B cell (primary cell): ENCODE measurements at regions of chr19 and their contacts with region 1.

Region 1: GRCh38 chr19:55339048-55339888 is at the start of gene KMT5C:
- DNase-seq: peak; percentile 100
- ATAC-seq: peak; percentile 79
- H3K4me3 ChIP-seq: peak within 1 kb of the TSS; percentile 65 to 91 (median 70)
- H3K4me3 Mint-ChIP-seq: peak within 1 kb of the TSS; percentile 94
- H3K27ac ChIP-seq: peak within 1 kb of the TSS; percentile 98
- H3K27ac Mint-ChIP-seq: peak within 1 kb of the TSS; percentile 93
- H3K4me1 ChIP-seq: peaks cover 16 to 28% of the 10 kb centered on the region in 2 donors
- H3K4me1 Mint-ChIP-seq: peaks cover 20% of the 10 kb centered on the region
- H3K27me3 ChIP-seq: peaks cover 0 to 23% (median 9%) of the 10 kb centered on the region in 4 experiments
- H3K27me3 Mint-ChIP-seq: peaks cover 19% of the 10 kb centered on the region
- CTCF ChIP-seq: no peak
- total RNA-seq, gene KMT5C: 19.6 and 22.2 TPM in 2 replicates

Region 2: GRCh38 chr19:53867225-53868090 is 1471.8 kb before region 1 on chr19 and contains the start of gene MYADM:
- CTCF ChIA-PET with region 1: no interaction called
- POLR2A ChIA-PET with region 1: no interaction called
- intact Hi-C with region 1: loop called (anchors 5 kb)
- DNase-seq: peak; percentile 100
- ATAC-seq: peak; percentile 77
- H3K4me3 ChIP-seq: peak within 1 kb of the TSS; percentile 82 to 100 (median 90)
- H3K4me3 Mint-ChIP-seq: peak within 1 kb of the TSS; percentile 92
- H3K27ac ChIP-seq: peak within 1 kb of the TSS; percentile 98 to 99
- H3K27ac Mint-ChIP-seq: peak within 1 kb of the TSS; percentile 99
- H3K4me1 ChIP-seq: peaks cover 33 to 59% of the 10 kb centered on the region in 2 donors
- H3K4me1 Mint-ChIP-seq: peaks cover 38% of the 10 kb centered on the region
- H3K27me3 ChIP-seq: no peaks in the 10 kb centered on the region
- H3K27me3 Mint-ChIP-seq: no peaks in the 10 kb centered on the region
- CTCF ChIP-seq: no peak
- total RNA-seq, gene MYADM: 18.5 and 18.9 TPM in 2 replicates

Region 3: DNA sequence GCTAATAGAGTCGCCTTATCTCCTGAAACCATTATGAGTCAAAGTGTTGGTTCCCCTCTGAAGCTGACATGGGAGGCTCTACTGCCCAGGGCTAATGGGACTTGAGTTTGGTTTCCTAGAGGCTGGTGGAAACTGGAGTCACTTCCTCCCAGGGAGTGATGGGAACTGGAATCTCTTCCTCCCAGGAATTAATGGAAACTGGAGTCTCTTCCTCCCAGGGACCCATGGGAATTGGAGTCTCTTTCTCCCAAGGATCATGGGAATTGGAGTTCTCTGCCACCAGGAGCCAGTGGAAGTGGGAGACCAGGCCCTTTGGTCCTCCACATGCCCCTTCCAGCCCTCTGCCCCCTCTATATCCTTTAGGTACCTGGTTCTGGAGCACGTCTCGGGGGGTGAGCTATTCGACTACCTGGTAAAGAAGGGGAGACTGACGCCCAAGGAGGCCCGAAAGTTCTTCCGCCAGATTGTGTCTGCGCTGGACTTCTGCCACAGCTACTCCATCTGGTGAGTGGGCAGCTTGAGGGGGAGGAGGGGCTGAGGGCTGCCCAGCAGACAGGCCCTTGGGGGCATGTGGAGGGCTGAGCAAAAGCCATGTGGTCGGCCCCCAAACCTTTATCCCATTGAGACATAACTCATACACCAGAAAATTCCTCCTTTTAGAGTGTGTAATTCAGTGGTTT is 50.0 kb before region 1 on chr19:
- CTCF ChIA-PET with region 1: interaction called, 12 read pairs
- POLR2A ChIA-PET with region 1: no interaction called
- intact Hi-C with region 1: no loop called
- DNase-seq: no peak
- ATAC-seq: no peak
- H3K4me3 ChIP-seq: no peak overlapping the region
- H3K4me3 Mint-ChIP-seq: no peak overlapping the region
- H3K27ac ChIP-seq: no peak overlapping the region
- H3K27ac Mint-ChIP-seq: no peak overlapping the region
- H3K4me1 ChIP-seq: peaks cover 4 to 6% of the 10 kb centered on the region in 2 donors
- H3K4me1 Mint-ChIP-seq: peaks cover 5% of the 10 kb centered on the region
- H3K27me3 ChIP-seq: no peaks in the 10 kb centered on the region
- H3K27me3 Mint-ChIP-seq: no peaks in the 10 kb centered on the region
- CTCF ChIP-seq: no peak

Region 4: GRCh38 chr19:55353803-55354697 is 14.8 kb after region 1 on chr19:
- CTCF ChIA-PET with region 1: interaction called, 3 read pairs
- POLR2A ChIA-PET with region 1: no interaction called
- intact Hi-C with region 1: loop called (anchors 1 kb)
- DNase-seq: peak; percentile 83
- ATAC-seq: peak; percentile 89
- H3K4me3 ChIP-seq: peak overlapping the region; percentile 27 to 51 (median 33)
- H3K4me3 Mint-ChIP-seq: peak overlapping the region; percentile 82
- H3K27ac ChIP-seq: no peak overlapping the region
- H3K27ac Mint-ChIP-seq: no peak overlapping the region
- H3K4me1 ChIP-seq: peaks cover 23 to 29% of the 10 kb centered on the region in 2 donors
- H3K4me1 Mint-ChIP-seq: peaks cover 23% of the 10 kb centered on the region
- H3K27me3 ChIP-seq: peaks cover 0 to 60% (median 24%) of the 10 kb centered on the region in 4 experiments
- H3K27me3 Mint-ChIP-seq: peaks cover 44% of the 10 kb centered on the region
- CTCF ChIP-seq: no peak

Region 5: GRCh38 chr19:55391191-55391670 is 52.0 kb after region 1 on chr19:
- CTCF ChIA-PET with region 1: no interaction called
- POLR2A ChIA-PET with region 1: no interaction called
- intact Hi-C with region 1: no loop called
- DNase-seq: no peak
- ATAC-seq: no peak
- H3K4me3 ChIP-seq: no peak overlapping the region
- H3K4me3 Mint-ChIP-seq: no peak overlapping the region
- H3K27ac ChIP-seq: no peak overlapping the region
- H3K27ac Mint-ChIP-seq: no peak overlapping the region
- H3K4me1 ChIP-seq: peaks cover 24 to 33% of the 10 kb centered on the region in 2 donors
- H3K4me1 Mint-ChIP-seq: peaks cover 40% of the 10 kb centered on the region
- H3K27me3 ChIP-seq: no peaks in the 10 kb centered on the region
- H3K27me3 Mint-ChIP-seq: no peaks in the 10 kb centered on the region
- CTCF ChIP-seq: no peak

Region 6: DNA sequence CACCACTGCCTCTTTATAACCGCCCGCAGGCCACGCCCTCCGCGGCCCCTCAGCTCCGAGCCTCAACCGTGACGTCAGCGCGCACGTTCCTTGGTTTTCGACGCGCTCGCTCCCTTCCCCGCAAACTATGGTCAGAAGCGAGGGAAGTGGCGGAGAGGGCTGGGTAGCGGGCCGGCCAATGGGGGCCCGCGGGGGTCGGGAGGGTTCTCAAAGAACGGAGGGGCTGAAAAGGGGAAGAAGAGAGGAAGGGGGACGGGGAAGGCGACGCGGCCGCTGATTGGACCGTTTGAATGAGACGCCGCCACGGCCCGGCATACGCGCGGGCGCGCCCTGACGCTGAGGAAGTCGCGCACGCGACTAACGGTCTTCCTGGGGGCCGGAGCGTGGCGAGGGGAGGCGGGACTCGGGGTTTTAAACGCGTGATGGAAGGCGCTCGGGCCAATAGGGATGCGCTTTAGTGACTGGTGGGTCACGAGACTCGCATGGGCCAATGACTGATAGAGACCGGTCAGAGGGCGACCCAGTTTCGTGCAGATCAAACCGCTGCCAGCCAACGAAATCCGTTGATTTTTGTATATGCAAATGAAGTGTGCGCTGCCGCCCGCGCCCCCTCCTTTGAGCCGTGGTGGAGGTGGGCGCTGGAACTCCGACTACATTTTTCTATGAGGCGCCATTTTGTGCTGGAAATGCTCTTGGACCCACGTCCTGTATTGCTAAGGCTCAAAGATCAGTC is 68.7 kb after region 1 on chr19:
- CTCF ChIA-PET with region 1: no interaction called
- POLR2A ChIA-PET with region 1: interaction called, 9 read pairs
- intact Hi-C with region 1: loop called (anchors 1 kb)
- DNase-seq: peak; percentile 100
- ATAC-seq: peak; percentile 83
- H3K4me3 ChIP-seq: peak overlapping the region; percentile 55 to 89 (median 77)
- H3K4me3 Mint-ChIP-seq: peak overlapping the region; percentile 98
- H3K27ac ChIP-seq: peak overlapping the region; percentile 99 to 100
- H3K27ac Mint-ChIP-seq: peak overlapping the region; percentile 99
- H3K4me1 ChIP-seq: peaks cover 11 to 25% of the 10 kb centered on the region in 2 donors
- H3K4me1 Mint-ChIP-seq: peaks cover 32% of the 10 kb centered on the region
- H3K27me3 ChIP-seq: no peaks in the 10 kb centered on the region
- H3K27me3 Mint-ChIP-seq: no peaks in the 10 kb centered on the region
- CTCF ChIP-seq: no peak

Region 7: DNA sequence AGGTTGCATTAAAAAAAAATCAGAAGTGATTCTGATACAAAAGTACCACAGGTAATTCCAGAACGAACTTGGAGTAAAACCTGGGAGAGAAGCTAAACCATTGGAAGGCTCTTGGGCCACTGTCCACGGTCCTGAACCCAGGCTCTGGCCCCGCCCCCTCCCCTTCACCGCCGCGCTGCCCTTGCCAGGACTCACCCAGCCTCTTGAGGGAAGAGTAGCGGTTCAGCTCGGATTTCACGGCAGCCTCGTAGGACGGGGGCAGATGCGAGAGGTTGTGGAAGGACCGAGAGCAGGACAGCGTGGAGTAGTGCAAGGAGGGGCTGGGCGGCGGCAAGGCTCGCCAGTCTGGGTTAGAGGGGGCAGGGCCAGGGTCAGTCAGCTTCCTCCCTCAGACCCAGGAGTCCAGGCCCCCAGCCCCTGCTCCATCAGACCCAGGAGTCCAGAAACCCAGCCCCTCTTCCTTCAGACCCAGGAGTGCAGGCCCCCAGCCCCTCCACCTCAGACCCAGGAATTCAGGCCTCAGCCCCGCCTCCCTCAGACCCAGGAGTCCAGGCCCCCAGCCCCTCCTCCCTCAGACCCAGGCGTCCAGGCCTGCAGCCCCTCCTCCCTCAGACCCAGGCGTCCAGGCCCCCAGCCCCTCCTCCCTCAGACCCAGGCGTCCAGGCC is 98.3 kb after region 1 on chr19:
- CTCF ChIA-PET with region 1: no interaction called
- POLR2A ChIA-PET with region 1: no interaction called
- intact Hi-C with region 1: no loop called
- DNase-seq: no peak
- ATAC-seq: no peak
- H3K4me3 ChIP-seq: no peak overlapping the region
- H3K4me3 Mint-ChIP-seq: no peak overlapping the region
- H3K27ac ChIP-seq: no peak overlapping the region
- H3K27ac Mint-ChIP-seq: no peak overlapping the region
- H3K4me1 ChIP-seq: peaks cover 21 to 31% of the 10 kb centered on the region in 2 donors
- H3K4me1 Mint-ChIP-seq: peaks cover 14% of the 10 kb centered on the region
- H3K27me3 ChIP-seq: peaks cover 0 to 75% (median 53%) of the 10 kb centered on the region in 4 experiments
- H3K27me3 Mint-ChIP-seq: peaks cover 53% of the 10 kb centered on the region
- CTCF ChIP-seq: no peak

Region 8: GRCh38 chr19:55452749-55453346 is 113.6 kb after region 1 on chr19:
- CTCF ChIA-PET with region 1: no interaction called
- POLR2A ChIA-PET with region 1: no interaction called
- intact Hi-C with region 1: no loop called
- DNase-seq: peak; percentile 42
- ATAC-seq: no peak
- H3K4me3 ChIP-seq: no peak overlapping the region
- H3K4me3 Mint-ChIP-seq: peak overlapping the region; percentile 48
- H3K27ac ChIP-seq: no peak overlapping the region
- H3K27ac Mint-ChIP-seq: no peak overlapping the region
- H3K4me1 ChIP-seq: peaks cover 15 to 17% of the 10 kb centered on the region in 2 donors
- H3K4me1 Mint-ChIP-seq: peaks cover 13% of the 10 kb centered on the region
- H3K27me3 ChIP-seq: peaks cover 0 to 36% (median 12%) of the 10 kb centered on the region in 4 experiments
- H3K27me3 Mint-ChIP-seq: peaks cover 18% of the 10 kb centered on the region
- CTCF ChIP-seq: no peak

Region 9: DNA sequence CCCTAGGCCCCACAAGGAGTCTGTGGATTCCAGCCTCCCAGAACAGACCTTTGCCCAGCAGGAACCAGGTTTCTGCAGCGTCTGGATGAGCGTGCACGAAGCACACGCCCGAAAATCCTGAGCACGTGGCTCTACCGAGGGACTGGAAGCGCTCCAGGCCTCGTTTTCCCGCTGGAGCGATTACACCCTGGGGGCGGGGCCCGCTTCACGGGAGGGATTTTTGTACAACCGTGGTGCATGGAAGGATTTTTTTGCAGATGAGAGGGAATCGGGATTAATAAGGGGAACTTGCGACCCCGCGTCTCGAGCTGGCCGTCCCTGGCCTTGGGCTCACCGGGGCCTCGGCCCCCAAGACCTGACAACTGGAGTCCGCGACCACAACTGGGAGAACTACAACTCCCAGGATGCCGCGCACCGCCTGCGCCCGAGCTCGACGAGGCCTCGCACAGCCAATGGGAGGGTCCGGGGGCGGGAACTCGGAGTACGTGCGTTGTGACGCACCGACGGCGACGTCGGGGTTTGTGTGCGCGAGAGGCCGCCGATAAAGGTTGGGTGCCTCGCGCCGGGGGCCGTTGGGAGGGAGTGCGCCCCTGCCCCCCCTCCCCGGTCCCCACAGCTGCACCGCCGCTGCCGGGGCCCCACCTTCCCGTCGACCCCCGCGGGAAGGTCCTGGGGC is 137.0 kb after region 1 on chr19 and contains the start of gene ZNF628:
- CTCF ChIA-PET with region 1: no interaction called
- POLR2A ChIA-PET with region 1: no interaction called
- intact Hi-C with region 1: loop called (anchors 2 kb)
- DNase-seq: peak; percentile 99
- ATAC-seq: peak; percentile 90
- H3K4me3 ChIP-seq: peak within 1 kb of the TSS; percentile 63 to 97 (median 77)
- H3K4me3 Mint-ChIP-seq: peak within 1 kb of the TSS; percentile 95
- H3K27ac ChIP-seq: peak within 1 kb of the TSS; percentile 69 to 92
- H3K27ac Mint-ChIP-seq: peak within 1 kb of the TSS; percentile 97
- H3K4me1 ChIP-seq: peaks cover 15 to 21% of the 10 kb centered on the region in 2 donors
- H3K4me1 Mint-ChIP-seq: peaks cover 34% of the 10 kb centered on the region
- H3K27me3 ChIP-seq: no peaks in the 10 kb centered on the region
- H3K27me3 Mint-ChIP-seq: no peaks in the 10 kb centered on the region
- CTCF ChIP-seq: no peak
- total RNA-seq, gene ZNF628: 13.3 and 15.5 TPM in 2 replicates